ENCODE measurements at regions of chr12 and their contacts with region 1.

Region 1: GRCh38 chr12:48903982-48904411 is 21.3 kb downstream of the FKBP11 start:
- DNase-seq: peak; percentile 84
- H3K4me3 Mint-ChIP-seq: peak overlapping the region; percentile 52
- H3K27ac Mint-ChIP-seq: no peak overlapping the region
- H3K4me1 Mint-ChIP-seq: peaks cover 21% of the 10 kb centered on the region
- H3K27me3 Mint-ChIP-seq: peaks cover 8% of the 10 kb centered on the region

Region 2: DNA sequence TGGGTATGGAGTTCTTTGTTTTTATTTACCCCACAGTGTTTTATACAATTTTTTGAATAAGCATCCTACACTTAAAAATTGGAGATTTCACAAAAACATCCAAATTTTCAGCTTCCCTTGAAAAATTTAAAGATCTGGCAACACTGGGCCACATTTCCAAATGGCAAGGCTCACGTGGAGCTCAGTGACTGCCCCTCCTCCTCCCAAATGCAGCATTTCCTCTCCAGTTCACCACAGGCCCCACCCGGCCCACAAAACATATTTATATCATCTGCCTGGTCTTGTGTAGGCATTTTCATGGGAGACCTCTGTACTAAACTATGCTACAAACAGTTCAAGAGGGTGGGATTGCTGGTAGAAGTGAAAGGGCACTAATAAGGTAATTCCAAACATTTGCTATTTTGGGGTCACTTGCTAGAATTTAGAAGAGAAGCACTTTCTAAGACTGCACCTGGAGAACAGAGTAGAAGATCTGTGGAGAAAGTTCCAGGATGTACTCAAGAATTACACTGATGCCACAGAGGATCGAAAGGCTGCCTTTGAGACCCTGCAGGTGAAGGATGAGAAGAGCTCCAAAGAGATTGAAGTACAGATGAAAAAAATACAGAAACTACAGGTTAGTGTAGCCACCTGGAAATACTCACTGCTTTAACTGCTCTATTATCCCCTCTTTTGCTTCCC is 14.0 kb after region 1 on chr12:
- CTCF ChIA-PET with region 1: interaction called, 61 read pairs
- POLR2A ChIA-PET with region 1: interaction called, 5 read pairs
- DNase-seq: peak; percentile 65
- H3K4me3 Mint-ChIP-seq: peak overlapping the region; percentile 81
- H3K27ac Mint-ChIP-seq: peak overlapping the region; percentile 85
- H3K4me1 Mint-ChIP-seq: peaks cover 34% of the 10 kb centered on the region
- H3K27me3 Mint-ChIP-seq: no peaks in the 10 kb centered on the region

Region 3: GRCh38 chr12:48924617-48925303 is 20.8 kb after region 1 on chr12:
- CTCF ChIA-PET with region 1: interaction called, 61 read pairs
- POLR2A ChIA-PET with region 1: interaction called, 5 read pairs
- DNase-seq: peak; percentile 71
- H3K4me3 Mint-ChIP-seq: peak overlapping the region; percentile 94
- H3K27ac Mint-ChIP-seq: peak overlapping the region; percentile 89
- H3K4me1 Mint-ChIP-seq: peaks cover 43% of the 10 kb centered on the region
- H3K27me3 Mint-ChIP-seq: no peaks in the 10 kb centered on the region